GM10248 (cell line): ENCODE measurements at regions of chr13 and their contacts with region 1.

Region 1: GRCh38 chr13:79241697-79242096 is 164.4 kb downstream of the RBM26 start:
- DNase-seq: no peak
- CTCF ChIP-seq: no peak

Region 2: GRCh38 chr13:79155883-79156282 is 85.8 kb before region 1 on chr13:
- CTCF ChIA-PET with region 1: no interaction called
- POLR2A ChIA-PET with region 1: no interaction called
- DNase-seq: no peak
- CTCF ChIP-seq: no peak

Region 3: GRCh38 chr13:79258489-79258888 is 16.8 kb after region 1 on chr13:
- CTCF ChIA-PET with region 1: interaction called, 11 read pairs
- POLR2A ChIA-PET with region 1: no interaction called
- DNase-seq: no peak
- CTCF ChIP-seq: no peak

Region 4: GRCh38 chr13:79271616-79272015 is 29.9 kb after region 1 on chr13:
- CTCF ChIA-PET with region 1: no interaction called
- POLR2A ChIA-PET with region 1: no interaction called
- DNase-seq: no peak
- CTCF ChIP-seq: no peak